ENCODE measurements at regions of chr4 and their contacts with region 1.

Region 1: GRCh38 chr4:173318648-173319211 is 15.4 kb downstream of the HMGB2 start:
- DNase-seq: no peak
- ATAC-seq: peak; percentile 27 to 44

Region 2: DNA sequence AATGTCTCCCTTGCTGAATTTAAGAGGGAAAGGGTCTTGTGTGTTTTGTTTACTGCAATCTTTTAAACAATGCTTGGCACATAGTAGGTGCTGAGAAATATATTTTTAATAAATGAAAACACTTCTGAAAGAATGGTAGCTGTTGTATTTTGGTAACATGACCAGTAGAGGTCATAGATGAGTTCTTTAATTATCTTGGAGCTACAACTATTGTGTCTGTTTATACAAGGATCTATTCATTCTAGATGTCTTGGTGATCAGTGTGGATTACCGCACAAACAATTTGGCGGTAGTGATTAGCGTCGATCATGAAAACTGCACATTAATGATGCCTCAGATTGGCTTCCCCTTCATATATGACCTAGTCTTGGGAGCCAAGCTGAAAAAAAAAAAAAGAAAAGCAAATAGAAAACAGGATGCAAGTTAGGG is 101.6 kb after region 1 on chr4:
- intact Hi-C with region 1: loop called (anchors 2 to 5 kb)
- DNase-seq: no peak
- ATAC-seq: peak; percentile 20 to 46

Measured in left cardiac atrium (tissue), 4 donors.